CD4-positive, alpha-beta memory T cell (primary cell): ENCODE measurements at regions of chr11 and their contacts with region 1.

Region 1: DNA sequence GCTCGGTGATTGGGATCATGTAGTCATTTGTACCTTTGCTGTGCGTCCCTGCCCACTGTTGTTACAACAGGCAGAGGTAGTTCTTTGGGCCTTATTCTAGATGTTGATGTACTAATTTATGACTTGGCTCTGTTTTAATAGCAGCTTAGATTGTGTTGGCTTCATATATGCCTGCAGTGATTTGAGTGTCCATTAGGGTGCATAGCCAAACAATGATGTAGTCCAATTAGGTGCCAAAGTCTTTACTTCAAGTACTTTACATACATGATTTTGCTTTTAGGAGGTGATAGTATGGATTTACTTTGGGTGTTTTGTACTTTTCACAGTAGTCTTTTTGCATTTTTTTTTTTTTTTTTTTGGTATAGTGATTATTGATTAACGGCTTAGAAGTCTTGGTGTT is 46.4 kb downstream of the PPP6R3 start:
- DNase-seq: no peak
- H3K4me3 ChIP-seq: no peak overlapping the region
- H3K4me3 Mint-ChIP-seq: peak overlapping the region in 3 of 8 donors; percentile 25 to 61 (median 58)
- H3K27ac ChIP-seq: no peak overlapping the region
- H3K27ac Mint-ChIP-seq: peak overlapping the region in 1 of 7 donors; percentile 48
- H3K4me1 ChIP-seq: peaks cover 73% of the 10 kb centered on the region
- H3K4me1 Mint-ChIP-seq: peaks cover 58 to 84% (median 72%) of the 10 kb centered on the region in 4 donors
- H3K27me3 ChIP-seq: no peaks in the 10 kb centered on the region
- H3K27me3 Mint-ChIP-seq: no peaks in the 10 kb centered on the region

Region 2: DNA sequence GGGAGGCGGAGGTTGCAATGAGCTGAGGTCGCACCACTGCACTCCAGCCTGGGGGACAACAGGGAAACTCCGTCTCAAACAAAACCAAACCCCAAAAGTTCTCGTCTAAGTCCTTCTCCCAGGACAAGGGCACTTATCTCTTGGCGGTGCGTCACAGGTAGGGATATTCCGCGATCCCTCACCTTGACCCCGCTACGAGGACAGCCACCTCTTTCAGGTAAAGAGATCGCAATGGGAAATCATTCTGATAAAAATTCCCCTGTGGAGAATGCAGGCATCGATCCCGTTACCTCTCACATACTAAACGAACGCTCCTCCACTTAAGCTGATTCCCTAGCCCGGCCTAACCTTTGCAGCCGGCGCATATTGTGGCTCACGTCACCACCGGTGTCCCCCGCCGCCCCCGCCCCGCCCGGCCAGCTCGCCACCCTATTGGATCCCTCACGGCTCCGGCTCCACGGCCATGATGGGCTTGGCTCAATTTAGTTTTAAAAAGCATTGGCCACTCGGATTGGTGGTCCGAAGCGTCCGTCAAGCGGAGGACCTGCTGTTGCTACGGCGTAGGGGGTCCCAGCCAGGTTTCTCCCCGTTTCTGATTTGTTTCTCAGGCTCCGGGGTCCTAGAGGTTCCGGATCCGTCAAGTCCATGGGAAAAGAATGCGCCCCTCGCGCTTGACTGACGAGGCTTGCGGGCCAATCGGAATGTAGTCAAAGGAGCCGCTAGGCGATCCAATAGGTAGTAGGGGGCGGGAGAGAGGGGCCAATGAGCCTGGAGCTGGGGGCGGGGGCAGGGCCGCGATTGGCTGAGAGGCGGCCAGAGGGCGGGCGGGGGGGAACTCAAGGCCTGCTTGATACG is 46.8 kb before region 1 on chr11:
- CTCF ChIA-PET with region 1: no interaction called
- POLR2A ChIA-PET with region 1: no interaction called
- intact Hi-C with region 1: loop called (anchors 5 kb)
- DNase-seq: peak; percentile 95 to 97 (median 96)
- H3K4me3 ChIP-seq: peak overlapping the region; percentile 75 to 90
- H3K4me3 Mint-ChIP-seq: peak overlapping the region; percentile 93 to 99 (median 95)
- H3K27ac ChIP-seq: peak overlapping the region; percentile 93
- H3K27ac Mint-ChIP-seq: peak overlapping the region; percentile 98 to 100 (median 99)
- H3K4me1 ChIP-seq: peaks cover 44% of the 10 kb centered on the region
- H3K4me1 Mint-ChIP-seq: peaks cover 22 to 44% (median 32%) of the 10 kb centered on the region in 4 donors
- H3K27me3 ChIP-seq: no peaks in the 10 kb centered on the region
- H3K27me3 Mint-ChIP-seq: peaks cover 0 to 6% of the 10 kb centered on the region in 2 donors

Region 3: GRCh38 chr11:68583041-68583446 is 76.1 kb after region 1 on chr11:
- CTCF ChIA-PET with region 1: no interaction called
- POLR2A ChIA-PET with region 1: no interaction called
- intact Hi-C with region 1: no loop called
- DNase-seq: no peak
- H3K4me3 ChIP-seq: no peak overlapping the region
- H3K4me3 Mint-ChIP-seq: no peak overlapping the region
- H3K27ac ChIP-seq: no peak overlapping the region
- H3K27ac Mint-ChIP-seq: no peak overlapping the region
- H3K4me1 ChIP-seq: no peaks in the 10 kb centered on the region
- H3K4me1 Mint-ChIP-seq: peaks cover 6 to 13% (median 8%) of the 10 kb centered on the region in 4 donors
- H3K27me3 ChIP-seq: no peaks in the 10 kb centered on the region
- H3K27me3 Mint-ChIP-seq: no peaks in the 10 kb centered on the region